Endothelial cell of umbilical vein (primary cell): ENCODE measurements at regions of chr12 and their contacts with region 1.

Region 1: GRCh38 chr12:116703214-116703795 is 34.6 kb downstream of the SPRING1 start:
- DNase-seq: peak; percentile 61
- H3K4me3 ChIP-seq: no peak overlapping the region
- H3K27ac ChIP-seq: no peak overlapping the region
- H3K4me1 ChIP-seq: no peaks in the 10 kb centered on the region
- H3K27me3 ChIP-seq: no peaks in the 10 kb centered on the region
- CTCF ChIP-seq: peak; percentile 78 to 84
- POLR2A ChIP-seq: no peak

Region 2: DNA sequence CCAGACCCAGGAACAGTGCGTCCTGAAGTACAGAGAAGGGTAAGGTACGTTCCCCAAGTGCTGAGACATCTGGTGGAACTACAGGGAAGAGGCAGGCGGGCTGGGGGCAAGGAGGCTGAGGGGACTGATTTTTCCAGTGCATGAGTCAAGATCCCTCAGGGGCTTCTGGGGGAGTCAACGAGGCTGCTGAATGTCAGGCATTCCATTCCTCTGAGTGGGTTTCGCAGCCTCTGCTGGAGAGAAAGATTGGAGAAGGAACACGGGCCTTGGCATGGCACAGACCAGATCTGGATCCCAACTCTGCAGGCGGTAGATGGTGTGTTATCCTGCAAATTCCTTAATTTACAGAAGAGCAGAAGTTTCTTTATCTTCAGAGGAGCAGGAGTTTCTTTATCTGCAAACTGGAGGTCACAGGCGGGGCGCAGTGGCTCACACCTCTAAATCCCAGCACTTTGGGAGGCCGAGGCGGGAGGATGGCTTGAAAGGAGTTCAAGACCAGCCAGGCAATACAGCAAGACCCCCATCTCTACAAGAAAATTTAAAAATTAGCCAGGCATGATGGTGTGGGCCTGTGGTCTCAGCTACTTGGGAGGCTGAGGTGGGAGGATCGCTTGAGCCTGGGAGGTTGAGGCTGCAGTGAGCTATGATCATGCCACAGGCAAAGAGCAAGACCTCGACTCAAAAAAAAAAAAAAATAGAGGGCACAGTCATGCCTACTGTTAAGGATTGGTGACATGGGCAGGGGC is 276.7 kb before region 1 on chr12:
- CTCF ChIA-PET with region 1: no interaction called
- POLR2A ChIA-PET with region 1: no interaction called
- dilution Hi-C with region 1: no loop called
- intact Hi-C with region 1: no loop called
- DNase-seq: peak; percentile 30
- H3K4me3 ChIP-seq: no peak overlapping the region
- H3K27ac ChIP-seq: no peak overlapping the region
- H3K4me1 ChIP-seq: no peaks in the 10 kb centered on the region
- H3K27me3 ChIP-seq: no peaks in the 10 kb centered on the region
- CTCF ChIP-seq: peak in 1 of 2 donors; percentile 8
- POLR2A ChIP-seq: no peak

Region 3: DNA sequence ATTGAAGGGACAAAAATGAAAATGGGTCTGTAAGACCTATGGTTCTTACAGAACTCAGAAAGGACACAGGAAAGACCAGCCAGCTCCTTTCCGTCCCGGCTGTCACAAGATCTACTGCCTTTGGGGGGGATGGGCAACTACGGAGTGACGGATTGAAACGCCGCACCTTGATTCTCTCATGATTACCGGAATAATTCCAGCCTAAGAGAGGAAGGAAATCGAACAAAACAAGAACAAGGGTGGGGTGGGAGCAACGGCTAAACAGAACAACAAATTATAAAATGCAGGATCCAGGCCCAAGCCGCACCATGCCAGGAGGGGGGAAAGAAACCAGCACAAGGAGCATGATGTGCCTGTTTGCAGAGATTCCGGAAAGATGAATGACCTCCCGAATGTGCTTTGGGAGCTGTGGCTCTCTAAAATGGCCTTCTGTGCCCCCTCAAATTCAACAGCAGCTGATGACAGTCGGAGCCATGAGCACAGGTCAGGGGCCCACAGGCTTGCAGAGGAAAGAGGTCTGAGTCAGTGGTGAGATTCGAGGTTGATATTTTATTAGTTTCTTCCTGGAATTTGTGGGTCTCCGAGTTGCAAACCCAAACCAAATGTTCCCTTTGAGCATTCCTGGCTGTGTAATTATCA is 37.5 kb before region 1 on chr12:
- CTCF ChIA-PET with region 1: no interaction called
- POLR2A ChIA-PET with region 1: no interaction called
- dilution Hi-C with region 1: no loop called
- intact Hi-C with region 1: no loop called
- DNase-seq: no peak
- H3K4me3 ChIP-seq: no peak overlapping the region
- H3K27ac ChIP-seq: no peak overlapping the region
- H3K4me1 ChIP-seq: no peaks in the 10 kb centered on the region
- H3K27me3 ChIP-seq: peaks cover 0 to 3% of the 10 kb centered on the region in 2 experiments
- CTCF ChIP-seq: no peak
- POLR2A ChIP-seq: no peak

Region 4: DNA sequence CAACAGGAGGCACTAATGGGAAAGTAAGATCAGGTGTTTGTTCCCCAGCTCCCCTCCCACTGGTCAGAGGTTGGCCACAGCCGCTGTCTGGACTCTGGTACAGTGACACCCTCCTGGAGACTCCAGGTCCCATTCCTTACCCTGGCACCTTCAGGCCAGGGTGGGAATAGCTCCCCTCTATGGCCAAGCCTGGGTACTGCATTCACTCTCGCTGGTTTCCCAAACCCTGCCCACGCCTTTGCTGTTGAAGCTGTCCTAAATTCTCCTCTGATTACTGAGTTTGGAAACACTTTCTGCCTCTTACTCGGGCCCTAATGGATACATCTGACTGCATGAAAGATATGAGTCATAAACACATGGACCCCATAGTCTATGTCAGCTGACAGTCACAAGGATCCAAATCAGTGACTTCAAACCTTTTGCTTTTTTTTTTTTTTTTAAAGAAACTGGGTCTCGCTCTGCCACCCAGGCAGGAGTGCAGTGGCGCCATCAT is 160.0 kb after region 1 on chr12:
- CTCF ChIA-PET with region 1: interaction called, 10 read pairs
- POLR2A ChIA-PET with region 1: no interaction called
- dilution Hi-C with region 1: no loop called
- intact Hi-C with region 1: loop called (anchors 1 kb)
- DNase-seq: peak; percentile 13
- H3K4me3 ChIP-seq: no peak overlapping the region
- H3K27ac ChIP-seq: no peak overlapping the region
- H3K4me1 ChIP-seq: no peaks in the 10 kb centered on the region
- H3K27me3 ChIP-seq: peaks cover 0 to 3% of the 10 kb centered on the region in 2 experiments
- CTCF ChIP-seq: peak; percentile 49 to 76
- POLR2A ChIP-seq: no peak

Region 5: DNA sequence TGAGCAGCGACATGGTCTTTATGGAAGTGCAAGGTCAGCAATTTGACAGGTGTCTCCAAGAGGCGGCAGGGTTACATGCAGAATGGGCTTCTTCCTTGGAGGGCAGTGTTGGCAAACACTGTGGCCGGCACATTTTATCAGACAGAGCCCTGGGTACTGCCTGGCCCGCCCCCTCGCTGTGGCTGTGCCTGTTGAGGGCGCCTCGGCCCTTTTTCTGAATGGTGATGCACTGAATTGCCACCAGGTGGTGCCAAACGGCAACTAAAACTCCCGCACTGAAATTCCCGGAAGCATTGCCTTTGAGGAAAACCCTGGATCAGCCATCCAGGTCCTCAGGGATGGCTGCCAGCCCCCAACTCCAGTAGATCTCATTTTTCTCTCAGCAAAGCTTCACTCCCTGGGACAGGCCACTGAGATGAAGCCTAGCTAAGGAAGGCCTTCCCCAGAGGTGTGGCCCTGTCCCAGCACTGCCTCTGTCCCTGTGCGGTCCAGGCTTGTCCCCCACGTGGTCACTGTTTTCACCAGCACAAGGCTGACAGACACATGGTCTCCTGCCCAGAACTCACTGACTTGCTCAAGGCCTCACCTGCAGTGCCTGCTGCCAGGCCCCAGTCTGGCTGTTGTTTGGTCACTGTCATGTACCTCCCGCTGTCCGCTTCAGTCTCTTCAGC is 322.3 kb after region 1 on chr12:
- CTCF ChIA-PET with region 1: interaction called, 3 read pairs
- POLR2A ChIA-PET with region 1: no interaction called
- dilution Hi-C with region 1: no loop called
- intact Hi-C with region 1: loop called (anchors 1 kb)
- DNase-seq: peak; percentile 77
- H3K4me3 ChIP-seq: no peak overlapping the region
- H3K27ac ChIP-seq: no peak overlapping the region
- H3K4me1 ChIP-seq: no peaks in the 10 kb centered on the region
- H3K27me3 ChIP-seq: no peaks in the 10 kb centered on the region
- CTCF ChIP-seq: peak; percentile 86 to 92
- POLR2A ChIP-seq: no peak

Region 6: GRCh38 chr12:117139025-117139717 is 435.9 kb after region 1 on chr12:
- CTCF ChIA-PET with region 1: interaction called, 7 read pairs
- POLR2A ChIA-PET with region 1: no interaction called
- dilution Hi-C with region 1: no loop called
- intact Hi-C with region 1: loop called (anchors 5 kb)
- DNase-seq: peak; percentile 41
- H3K4me3 ChIP-seq: peak overlapping the region in 1 of 3 experiments; percentile 2
- H3K27ac ChIP-seq: no peak overlapping the region
- H3K4me1 ChIP-seq: peaks cover under 1% of the 10 kb centered on the region
- H3K27me3 ChIP-seq: no peaks in the 10 kb centered on the region
- CTCF ChIP-seq: no peak
- POLR2A ChIP-seq: no peak